Caco-2 (cell line): ENCODE measurements at regions of chr12 and their contacts with region 1.

Region 1: GRCh38 chr12:132710422-132711168 is at the start of gene PGAM5:
- DNase-seq: peak; percentile 92
- H3K4me3 ChIP-seq: peak within 1 kb of the TSS; percentile 91
- H3K4me3 Mint-ChIP-seq: peak within 1 kb of the TSS; percentile 99
- H3K27ac Mint-ChIP-seq: peak within 1 kb of the TSS; percentile 95
- H3K4me1 ChIP-seq: no peaks in the 10 kb centered on the region
- H3K4me1 Mint-ChIP-seq: no peaks in the 10 kb centered on the region
- H3K27me3 ChIP-seq: no peaks in the 10 kb centered on the region
- H3K27me3 Mint-ChIP-seq: no peaks in the 10 kb centered on the region
- CTCF ChIP-seq: no peak
- total RNA-seq, gene PGAM5: 78.1 and 87.8 TPM in 2 replicates

Region 2: DNA sequence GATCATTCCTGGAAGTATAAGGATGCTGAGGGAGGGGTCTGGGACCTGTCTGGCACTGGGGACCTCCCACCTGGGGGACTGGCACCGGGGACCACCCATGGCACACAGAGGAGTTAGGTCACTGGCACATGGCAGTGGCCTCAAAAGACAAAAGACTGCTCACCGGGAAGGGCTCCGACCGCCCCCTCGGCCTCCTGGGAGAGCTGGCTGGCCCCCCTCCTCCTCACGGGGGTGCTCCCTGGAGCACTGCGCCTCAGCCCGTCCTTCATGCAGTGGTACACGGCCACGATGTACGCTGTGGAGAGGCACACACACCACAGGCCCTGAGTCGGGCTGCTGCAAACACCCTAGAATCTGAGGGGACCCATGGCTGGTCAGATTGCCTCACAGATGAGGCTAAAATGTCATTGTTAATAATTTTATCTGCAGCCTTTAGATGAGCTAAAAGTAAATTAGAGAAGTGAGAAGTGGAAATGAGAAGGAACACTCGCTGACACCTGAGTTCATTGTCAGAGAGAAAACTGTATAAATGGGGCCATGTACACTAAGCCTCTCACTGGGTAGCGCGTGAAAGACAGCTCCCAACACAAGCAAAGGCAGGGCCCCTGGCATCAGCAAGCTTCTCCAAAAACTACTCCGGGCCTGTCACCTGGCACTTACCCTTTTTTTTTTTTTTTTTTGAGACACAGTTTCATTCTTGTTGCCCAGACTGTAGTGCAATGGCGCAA is 77.9 kb before region 1 on chr12:
- CTCF ChIA-PET with region 1: no interaction called
- POLR2A ChIA-PET with region 1: no interaction called
- intact Hi-C with region 1: no loop called
- DNase-seq: no peak
- H3K4me3 ChIP-seq: no peak overlapping the region
- H3K4me3 Mint-ChIP-seq: no peak overlapping the region
- H3K27ac Mint-ChIP-seq: no peak overlapping the region
- H3K4me1 ChIP-seq: no peaks in the 10 kb centered on the region
- H3K4me1 Mint-ChIP-seq: peaks cover 18% of the 10 kb centered on the region
- H3K27me3 ChIP-seq: no peaks in the 10 kb centered on the region
- H3K27me3 Mint-ChIP-seq: no peaks in the 10 kb centered on the region
- CTCF ChIP-seq: no peak

Region 3: DNA sequence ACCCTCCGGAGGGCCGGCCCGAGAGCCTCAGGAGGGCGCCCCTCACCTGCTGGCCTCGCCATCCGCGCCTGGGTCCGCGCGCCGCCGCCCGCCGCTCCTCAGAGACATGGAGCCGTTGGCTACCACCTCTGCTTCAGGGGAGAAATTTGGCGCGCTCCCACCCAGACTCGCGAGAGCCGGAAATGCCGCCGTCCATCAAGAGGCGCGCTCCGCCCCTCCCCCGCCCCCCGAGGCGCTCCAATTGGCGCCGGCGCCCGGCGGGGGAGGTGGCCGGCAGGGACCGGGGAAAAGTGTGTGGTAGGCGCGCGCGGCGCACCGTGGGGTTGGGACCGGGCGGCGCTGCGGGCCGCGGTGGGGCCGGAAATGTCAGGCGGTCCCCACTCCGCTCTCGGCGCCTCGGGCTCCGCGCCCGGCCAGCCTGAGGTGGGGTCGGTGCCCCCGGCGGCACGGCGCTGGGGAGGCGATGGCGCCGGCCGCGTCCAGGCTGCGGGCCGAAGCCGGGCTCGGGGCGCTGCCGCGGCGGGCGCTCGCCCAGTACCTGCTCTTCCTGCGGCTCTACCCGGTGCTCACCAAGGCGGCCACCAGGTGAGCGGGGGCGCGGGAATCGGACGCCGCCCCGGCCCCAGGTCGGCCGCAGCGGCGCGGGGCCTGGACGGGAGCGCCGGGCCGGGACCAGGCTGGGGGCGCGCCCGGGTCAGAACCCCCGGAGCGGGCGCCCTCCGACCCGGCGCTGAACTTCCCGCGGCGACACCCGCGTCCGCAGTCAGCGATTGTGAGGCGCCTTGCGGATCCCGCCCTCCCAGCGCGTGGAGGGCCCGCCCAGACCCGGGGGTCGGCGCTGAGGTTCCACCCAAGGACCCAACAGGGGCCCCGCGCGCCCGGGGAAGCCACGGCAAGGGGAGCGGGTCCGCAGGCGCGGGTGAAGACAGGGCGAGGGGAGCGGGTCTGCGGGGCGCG is 23.1 kb before region 1 on chr12 and contains the starts of genes POLE and PXMP2:
- CTCF ChIA-PET with region 1: no interaction called
- POLR2A ChIA-PET with region 1: no interaction called
- intact Hi-C with region 1: loop called (anchors 2 kb)
- DNase-seq: peak; percentile 95 to 97
- H3K4me3 ChIP-seq: peak within 1 kb of the TSS; percentile 71
- H3K4me3 Mint-ChIP-seq: peak within 1 kb of the TSS; percentile 84
- H3K27ac Mint-ChIP-seq: peak within 1 kb of the TSS; percentile 76
- H3K4me1 ChIP-seq: peaks cover 6% of the 10 kb centered on the region
- H3K4me1 Mint-ChIP-seq: peaks cover 6% of the 10 kb centered on the region
- H3K27me3 ChIP-seq: no peaks in the 10 kb centered on the region
- H3K27me3 Mint-ChIP-seq: no peaks in the 10 kb centered on the region
- CTCF ChIP-seq: no peak
- total RNA-seq, gene POLE: 167 and 170 TPM in 2 replicates
- total RNA-seq, gene PXMP2: 29.8 and 39.9 TPM in 2 replicates

Region 4: GRCh38 chr12:132771126-132771838 is 60.7 kb after region 1 on chr12:
- CTCF ChIA-PET with region 1: no interaction called
- POLR2A ChIA-PET with region 1: no interaction called
- intact Hi-C with region 1: no loop called
- DNase-seq: no peak
- H3K4me3 ChIP-seq: no peak overlapping the region
- H3K4me3 Mint-ChIP-seq: no peak overlapping the region
- H3K27ac Mint-ChIP-seq: no peak overlapping the region
- H3K4me1 ChIP-seq: no peaks in the 10 kb centered on the region
- H3K4me1 Mint-ChIP-seq: no peaks in the 10 kb centered on the region
- H3K27me3 ChIP-seq: no peaks in the 10 kb centered on the region
- H3K27me3 Mint-ChIP-seq: no peaks in the 10 kb centered on the region
- CTCF ChIP-seq: no peak

Region 5: DNA sequence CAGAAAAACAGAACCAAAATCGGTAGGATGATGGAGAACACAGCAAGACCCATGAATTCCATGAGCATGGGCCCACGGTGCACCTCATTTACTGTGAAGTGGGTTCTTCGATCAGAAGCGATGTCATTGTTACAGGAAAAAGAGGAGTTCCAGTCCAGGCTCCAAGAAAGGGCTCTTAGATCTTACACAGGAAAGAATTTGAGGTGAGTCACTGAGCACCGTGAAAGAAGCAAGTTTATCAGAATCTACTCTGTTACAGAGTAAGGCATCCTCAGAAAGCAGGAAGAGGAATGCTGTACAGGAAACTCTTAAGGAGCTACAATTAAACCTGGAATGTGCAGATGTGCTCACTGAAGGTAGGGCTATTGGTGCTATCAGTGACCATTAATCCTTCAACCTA is 188.4 kb after region 1 on chr12:
- CTCF ChIA-PET with region 1: no interaction called
- POLR2A ChIA-PET with region 1: no interaction called
- intact Hi-C with region 1: no loop called
- DNase-seq: no peak
- H3K4me3 ChIP-seq: no peak overlapping the region
- H3K4me3 Mint-ChIP-seq: no peak overlapping the region
- H3K27ac Mint-ChIP-seq: no peak overlapping the region
- H3K4me1 ChIP-seq: no peaks in the 10 kb centered on the region
- H3K4me1 Mint-ChIP-seq: no peaks in the 10 kb centered on the region
- H3K27me3 ChIP-seq: no peaks in the 10 kb centered on the region
- H3K27me3 Mint-ChIP-seq: no peaks in the 10 kb centered on the region
- CTCF ChIP-seq: no peak